Mucosa of descending colon (tissue), 3 donors: ENCODE measurements at regions of chr10 and their contacts with region 1.

Region 1: DNA sequence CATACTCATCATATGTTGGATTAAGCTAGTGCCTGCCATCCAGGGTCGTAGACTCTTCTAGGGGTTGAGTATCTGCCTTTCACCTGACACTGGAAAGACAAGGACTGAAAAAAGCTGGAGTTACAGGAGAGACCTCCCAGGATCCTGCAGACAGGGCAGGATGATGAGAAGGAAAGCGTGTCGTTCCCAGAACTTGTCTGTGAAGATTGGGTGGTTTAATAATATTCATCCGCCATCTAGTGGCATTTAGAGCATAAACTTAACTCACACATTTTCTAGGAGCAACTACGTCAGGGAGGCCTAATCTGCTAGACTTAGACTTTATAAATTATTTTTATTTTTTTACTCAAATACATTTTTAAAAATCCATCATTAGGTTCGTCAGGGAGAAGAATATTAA is 59.6 kb downstream of the ADRB1 start:
- DNase-seq: peak in 1 of 3 donors; percentile 35
- ATAC-seq: peak; percentile 68
- H3K4me3 ChIP-seq: no peak overlapping the region
- H3K4me1 ChIP-seq: peaks cover 12% of the 10 kb centered on the region
- CTCF ChIP-seq: no peak

Region 2: GRCh38 chr10:112912410-112912928 is 1190.8 kb before region 1 on chr10:
- intact Hi-C with region 1: no loop called
- DNase-seq: peak in 1 of 3 donors; percentile 41
- ATAC-seq: peak; percentile 64
- H3K4me3 ChIP-seq: no peak overlapping the region
- H3K4me1 ChIP-seq: peaks cover 17% of the 10 kb centered on the region
- CTCF ChIP-seq: no peak

Region 3: GRCh38 chr10:113704637-113705343 is 398.5 kb before region 1 on chr10:
- intact Hi-C with region 1: loop called in 1 of 2 experiments (anchors 10 kb)
- DNase-seq: peak in 1 of 3 donors; percentile 41
- ATAC-seq: peak; percentile 48
- H3K4me3 ChIP-seq: no peak overlapping the region
- H3K4me1 ChIP-seq: no peaks in the 10 kb centered on the region
- CTCF ChIP-seq: no peak

Region 4: DNA sequence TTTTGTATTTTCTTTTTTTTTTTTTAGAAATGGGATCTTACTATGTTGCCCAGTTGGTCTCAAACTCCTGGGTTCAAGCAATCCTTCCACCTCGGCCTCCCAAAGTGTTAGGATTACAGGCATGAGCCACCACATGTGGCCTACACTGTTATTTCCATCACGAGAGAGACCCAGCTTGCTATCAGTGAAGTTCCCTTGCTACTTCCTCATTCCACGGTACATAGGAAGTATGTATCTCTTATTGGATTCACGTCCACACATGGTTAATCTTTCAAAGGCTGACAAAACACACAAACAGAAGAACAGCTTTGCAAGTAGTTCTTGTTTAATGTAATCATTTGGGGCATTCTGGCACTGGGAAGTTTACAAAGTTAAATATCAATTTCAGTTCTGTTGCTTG is 300.3 kb before region 1 on chr10:
- intact Hi-C with region 1: loop called (anchors 5 kb)
- DNase-seq: no peak
- ATAC-seq: peak; percentile 25
- H3K4me3 ChIP-seq: no peak overlapping the region
- H3K4me1 ChIP-seq: no peaks in the 10 kb centered on the region
- CTCF ChIP-seq: no peak